Activated T-helper 1 cell treated with anti-CD3 and anti-CD28 coated beads, Interleukin-12 subunit alpha, Interleukin-12 subunit beta, Interleukin-2, Interleukin-4 antibody, amounts not matched to agents 30 ng/mL and 10 ng/mL and 1 ng/mL, durations not matched to agents 14 hours and 24 hours and 36 hours (primary cell): ENCODE measurements at regions of chr6 and their contacts with region 1.

Region 1: GRCh38 chr6:99588618-99589289 is 17.9 kb upstream of the PRDM13 start:
- DNase-seq: peak; percentile 43
- H3K4me3 Mint-ChIP-seq: peak overlapping the region; percentile 86
- H3K27ac Mint-ChIP-seq: peak overlapping the region; percentile 29
- H3K4me1 Mint-ChIP-seq: peaks cover 34% of the 10 kb centered on the region
- H3K27me3 Mint-ChIP-seq: peaks cover 80% of the 10 kb centered on the region

Region 2: GRCh38 chr6:99603421-99604165 is 14.8 kb after region 1 on chr6:
- intact Hi-C with region 1: loop called (anchors 1 kb)
- DNase-seq: no peak
- H3K4me3 Mint-ChIP-seq: peak overlapping the region; percentile 15
- H3K27ac Mint-ChIP-seq: no peak overlapping the region
- H3K4me1 Mint-ChIP-seq: peaks cover 31% of the 10 kb centered on the region
- H3K27me3 Mint-ChIP-seq: peaks cover 85% of the 10 kb centered on the region

Region 3: GRCh38 chr6:99746261-99746895 is 157.6 kb after region 1 on chr6:
- intact Hi-C with region 1: loop called (anchors 1 kb)
- DNase-seq: peak; percentile 45
- H3K4me3 Mint-ChIP-seq: no peak overlapping the region
- H3K27ac Mint-ChIP-seq: no peak overlapping the region
- H3K4me1 Mint-ChIP-seq: no peaks in the 10 kb centered on the region
- H3K27me3 Mint-ChIP-seq: peaks cover 26% of the 10 kb centered on the region

Region 4: GRCh38 chr6:99761711-99762110 is 173.0 kb after region 1 on chr6:
- intact Hi-C with region 1: no loop called
- DNase-seq: no peak
- H3K4me3 Mint-ChIP-seq: no peak overlapping the region
- H3K27ac Mint-ChIP-seq: no peak overlapping the region
- H3K4me1 Mint-ChIP-seq: no peaks in the 10 kb centered on the region
- H3K27me3 Mint-ChIP-seq: peaks cover 11% of the 10 kb centered on the region

Region 5: GRCh38 chr6:99822741-99823512 is 234.2 kb after region 1 on chr6:
- intact Hi-C with region 1: loop called (anchors 2 kb)
- DNase-seq: no peak
- H3K4me3 Mint-ChIP-seq: peak overlapping the region; percentile 62
- H3K27ac Mint-ChIP-seq: no peak overlapping the region
- H3K4me1 Mint-ChIP-seq: peaks cover 7% of the 10 kb centered on the region
- H3K27me3 Mint-ChIP-seq: peaks cover 7% of the 10 kb centered on the region